HEK293T (cell line): ENCODE measurements at regions of chr3 and their contacts with region 1.

Region 1: GRCh38 chr3:185770109-185770508 is 54.7 kb downstream of the IGF2BP2 start:
- DNase-seq: no peak

Region 2: GRCh38 chr3:185733980-185734724 is 36.0 kb before region 1 on chr3:
- CTCF ChIA-PET with region 1: interaction called, 18 read pairs
- POLR2A ChIA-PET with region 1: interaction called, 3 read pairs
- DNase-seq: peak; percentile 61